ENCODE measurements at regions of chr14 and their contacts with region 1.

Region 1: GRCh38 chr14:106631879-106632278 is 1105.5 kb downstream of the TMEM121 start:
- DNase-seq: no peak
- ATAC-seq: no peak
- H3K4me3 ChIP-seq: no peak overlapping the region
- H3K27ac ChIP-seq: no peak overlapping the region
- H3K4me1 ChIP-seq: no peaks in the 10 kb centered on the region
- H3K27me3 ChIP-seq: no peaks in the 10 kb centered on the region; a peak in 2 of 4 replicates
- CTCF ChIP-seq: no peak
- EP300 ChIP-seq: no peak
- POLR2A ChIP-seq: no peak
- RAD21 ChIP-seq: no peak

Region 2: GRCh38 chr14:106657460-106657859 is 25.6 kb after region 1 on chr14:
- CTCF ChIA-PET with region 1: interaction called, 33 read pairs
- POLR2A ChIA-PET with region 1: no interaction called
- RAD21 ChIA-PET with region 1: no interaction called
- SMC1A ChIA-PET with region 1: no interaction called
- in situ Hi-C with region 1: no loop called
- intact Hi-C with region 1: no loop called
- DNase-seq: no peak
- ATAC-seq: peak; percentile 70
- H3K4me3 ChIP-seq: no peak overlapping the region
- H3K27ac ChIP-seq: no peak overlapping the region
- H3K4me1 ChIP-seq: peaks cover 7% of the 10 kb centered on the region
- H3K27me3 ChIP-seq: no peaks in the 10 kb centered on the region
- CTCF ChIP-seq: peak; percentile 68 to 85 (median 81)
- EP300 ChIP-seq: no peak
- POLR2A ChIP-seq: no peak
- RAD21 ChIP-seq: peak; percentile 60